Sigmoid colon (tissue), 7 donors: ENCODE measurements at regions of chr2 and their contacts with region 1.

Region 1: GRCh38 chr2:180359522-180360282 is 352.6 kb upstream of the CWC22 start:
- DNase-seq: no peak
- H3K4me3 ChIP-seq: no peak overlapping the region
- H3K27ac ChIP-seq: no peak overlapping the region
- H3K4me1 ChIP-seq: peaks cover 0 to 8% (median 7%) of the 10 kb centered on the region in 4 donors
- H3K27me3 ChIP-seq: no peaks in the 10 kb centered on the region
- CTCF ChIP-seq: no peak
- EP300 ChIP-seq: no peak
- POLR2A ChIP-seq: no peak

Region 2: DNA sequence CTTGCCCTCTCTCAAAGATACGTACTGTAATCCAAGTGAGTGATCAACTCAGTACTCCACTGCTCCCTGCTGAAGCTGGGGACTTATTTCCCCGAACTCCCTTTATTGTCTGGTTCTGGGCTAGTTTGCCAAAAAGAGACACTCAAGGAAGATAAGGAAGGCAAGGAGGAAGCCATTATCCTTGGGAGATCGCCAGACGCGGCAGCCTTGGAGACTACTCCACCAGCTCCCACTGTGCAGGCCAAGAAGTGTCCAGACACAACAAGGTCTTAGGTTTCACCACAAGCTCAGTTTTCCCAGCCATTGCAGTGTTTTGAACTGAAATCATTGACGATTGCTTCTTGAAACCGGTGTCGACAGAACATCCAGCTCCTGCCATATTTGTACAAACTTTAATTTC is 181.1 kb after region 1 on chr2:
- intact Hi-C with region 1: loop called (anchors 10 kb)
- DNase-seq: no peak
- H3K4me3 ChIP-seq: no peak overlapping the region
- H3K27ac ChIP-seq: no peak overlapping the region
- H3K4me1 ChIP-seq: peaks cover 0 to 11% (median 4%) of the 10 kb centered on the region in 4 donors
- H3K27me3 ChIP-seq: no peaks in the 10 kb centered on the region
- CTCF ChIP-seq: no peak
- EP300 ChIP-seq: no peak
- POLR2A ChIP-seq: no peak